Right ventricle myocardium superior (tissue), 1 donor: ENCODE measurements at regions of chr3 and their contacts with region 1.

Region 1: DNA sequence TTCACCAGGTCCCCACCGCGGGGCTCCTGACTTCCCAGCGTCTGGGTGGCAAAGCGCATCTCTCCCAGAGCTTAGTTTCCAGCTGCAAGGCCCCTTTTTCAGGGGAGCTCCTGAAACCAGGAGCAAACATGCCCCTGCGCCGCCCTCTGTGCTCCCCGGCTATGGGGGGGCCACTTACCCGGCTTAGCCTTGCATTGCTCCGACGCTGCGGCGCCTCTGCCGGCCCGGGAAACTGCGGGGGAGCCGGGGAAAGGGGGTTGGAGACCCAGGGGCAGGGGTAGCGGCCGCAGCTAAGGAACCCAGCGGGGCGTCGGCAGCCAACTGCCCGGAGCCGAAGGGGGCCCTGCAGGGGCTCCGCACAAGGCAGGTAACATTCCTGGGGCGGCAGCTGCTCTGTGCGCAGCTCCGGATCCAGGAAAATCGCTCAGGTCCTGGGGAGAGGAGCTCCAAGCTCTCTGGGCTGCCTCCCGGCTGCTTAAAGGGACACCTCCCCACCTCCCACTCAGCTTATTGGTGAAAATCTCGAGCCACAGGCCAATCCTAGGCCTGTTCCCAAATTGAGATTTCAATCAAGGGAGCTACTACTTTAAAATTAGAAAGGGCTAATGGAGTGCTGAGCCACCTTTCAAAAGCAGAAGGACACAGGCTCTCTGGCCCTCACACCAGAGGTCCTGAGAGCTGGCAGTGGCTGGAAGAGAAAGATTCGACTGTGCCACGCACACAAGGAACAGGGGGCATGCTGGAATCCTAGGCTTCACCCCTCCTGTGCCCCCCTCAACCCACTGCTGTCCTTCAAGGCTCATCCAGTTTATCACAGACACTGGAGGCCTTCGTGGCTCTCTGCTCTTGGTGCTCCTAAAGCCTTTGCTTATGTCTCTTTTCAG is 42.7 kb upstream of the PRICKLE2 start:
- DNase-seq: peak; percentile 75
- ATAC-seq: peak; percentile 81

Region 2: DNA sequence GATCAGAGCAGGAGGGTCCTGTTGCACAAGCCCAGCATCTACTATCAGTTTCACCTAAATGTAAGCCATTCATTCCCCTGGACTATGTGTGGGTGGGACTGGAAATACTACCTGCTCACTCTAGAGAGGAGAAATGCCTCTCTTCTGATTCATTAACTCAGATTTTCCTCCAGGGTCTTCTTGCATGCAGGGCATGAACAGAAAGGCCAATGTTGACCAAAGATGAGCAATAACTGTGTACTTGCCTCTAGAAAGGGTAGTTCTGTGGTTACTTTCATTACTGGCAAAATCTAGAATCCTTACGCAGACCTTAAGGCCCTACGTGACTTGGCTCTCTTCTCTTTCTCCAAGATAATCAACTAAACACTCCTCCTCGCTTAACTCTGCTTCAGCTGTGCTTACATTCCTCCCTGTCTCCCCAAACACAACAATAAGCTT is 163.3 kb before region 1 on chr3:
- intact Hi-C with region 1: no loop called
- DNase-seq: no peak
- ATAC-seq: no peak

Region 3: GRCh38 chr3:64213962-64214379 is 54.0 kb before region 1 on chr3:
- intact Hi-C with region 1: loop called (anchors 10 kb)
- DNase-seq: peak; percentile 89
- ATAC-seq: peak; percentile 87

Region 4: DNA sequence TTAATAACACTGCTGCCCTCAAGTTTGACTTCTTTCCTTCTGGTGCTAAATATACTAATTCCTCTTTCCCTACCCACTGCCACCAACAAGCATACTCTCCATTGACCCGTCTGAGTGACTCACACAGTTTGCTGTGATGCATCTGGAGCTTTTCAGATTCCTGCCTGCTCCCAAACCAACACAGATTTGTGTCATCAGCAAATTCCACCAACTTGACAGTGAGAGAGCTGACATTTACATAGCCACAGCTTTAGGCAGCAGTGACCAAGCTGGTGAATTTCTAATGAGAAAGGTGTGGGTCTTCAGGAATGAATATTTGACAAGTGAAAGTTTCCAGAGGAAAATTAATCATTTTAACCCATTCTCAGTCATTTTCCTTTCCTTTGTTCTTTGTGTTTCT is 53.8 kb after region 1 on chr3:
- intact Hi-C with region 1: no loop called
- DNase-seq: no peak
- ATAC-seq: no peak